Adrenal gland (tissue), 19 donors: ENCODE measurements at regions of chr7 and their contacts with region 1.

Region 1: GRCh38 chr7:2688409-2689331 is 668 bp downstream of the AMZ1 start:
- DNase-seq: no peak
- H3K4me3 ChIP-seq: no peak overlapping the region
- H3K27ac ChIP-seq: no peak overlapping the region
- H3K4me1 ChIP-seq: peaks cover 0 to 14% of the 10 kb centered on the region in 2 donors
- H3K27me3 ChIP-seq: peaks cover 37% of the 10 kb centered on the region
- CTCF ChIP-seq: no peak
- POLR2A ChIP-seq: no peak

Region 2: DNA sequence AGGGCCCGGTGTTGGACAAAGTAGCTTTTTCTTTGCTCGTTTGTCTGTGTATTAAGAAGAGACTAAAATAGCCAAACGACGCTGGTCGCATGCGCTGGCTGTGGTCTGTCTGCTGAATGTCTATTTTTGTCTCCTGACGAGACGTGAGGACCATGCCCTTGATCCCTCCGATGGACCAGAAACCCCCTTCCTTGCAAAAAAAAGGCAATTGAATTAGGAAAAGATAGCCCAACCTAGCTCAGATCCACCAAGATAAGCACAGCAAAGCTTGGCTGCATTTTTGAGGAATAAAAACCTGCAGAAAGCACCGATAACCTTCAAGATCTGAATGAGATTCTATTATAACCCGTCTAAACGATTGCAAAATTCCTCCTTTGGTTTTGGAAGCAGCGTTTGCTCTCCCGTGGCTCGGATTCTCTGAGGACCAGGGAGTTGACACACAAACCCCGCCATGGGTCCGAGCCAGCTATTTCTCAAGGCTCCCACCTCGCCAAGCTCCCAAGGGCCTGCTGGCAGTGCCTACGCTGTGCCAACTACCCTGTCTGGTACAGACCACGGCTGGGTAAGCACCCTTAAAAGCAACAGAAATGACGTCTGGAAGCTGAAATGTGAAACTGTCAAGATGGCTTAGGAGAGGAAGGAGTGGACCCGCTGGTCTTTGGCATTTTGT is 74.6 kb before region 1 on chr7:
- intact Hi-C with region 1: loop called in 1 of 2 experiments (anchors 5 kb)
- DNase-seq: peak; percentile 67 to 93 (median 90)
- H3K4me3 ChIP-seq: no peak overlapping the region
- H3K27ac ChIP-seq: peak overlapping the region in 4 of 5 donors; percentile 58 to 87 (median 76)
- H3K4me1 ChIP-seq: peaks cover 12 to 30% of the 10 kb centered on the region in 2 donors
- H3K27me3 ChIP-seq: no peaks in the 10 kb centered on the region
- CTCF ChIP-seq: no peak
- POLR2A ChIP-seq: peak in 1 of 2 donors; percentile 29